Colonic mucosa (tissue), 4 donors: ENCODE measurements at regions of chr3 and their contacts with region 1.

Region 1: GRCh38 chr3:111012388-111013248 is 59.0 kb upstream of the NECTIN3 start:
- DNase-seq: peak; percentile 36
- H3K4me3 ChIP-seq: no peak overlapping the region
- H3K27ac ChIP-seq: no peak overlapping the region
- H3K4me1 ChIP-seq: no peaks in the 10 kb centered on the region
- H3K27me3 ChIP-seq: no peaks in the 10 kb centered on the region
- CTCF ChIP-seq: peak; percentile 24

Region 2: GRCh38 chr3:111080413-111080812 is 67.8 kb after region 1 on chr3:
- intact Hi-C with region 1: no loop called
- DNase-seq: no peak
- H3K4me3 ChIP-seq: no peak overlapping the region
- H3K27ac ChIP-seq: no peak overlapping the region
- H3K4me1 ChIP-seq: no peaks in the 10 kb centered on the region
- H3K27me3 ChIP-seq: no peaks in the 10 kb centered on the region
- CTCF ChIP-seq: peak; percentile 39

Region 3: DNA sequence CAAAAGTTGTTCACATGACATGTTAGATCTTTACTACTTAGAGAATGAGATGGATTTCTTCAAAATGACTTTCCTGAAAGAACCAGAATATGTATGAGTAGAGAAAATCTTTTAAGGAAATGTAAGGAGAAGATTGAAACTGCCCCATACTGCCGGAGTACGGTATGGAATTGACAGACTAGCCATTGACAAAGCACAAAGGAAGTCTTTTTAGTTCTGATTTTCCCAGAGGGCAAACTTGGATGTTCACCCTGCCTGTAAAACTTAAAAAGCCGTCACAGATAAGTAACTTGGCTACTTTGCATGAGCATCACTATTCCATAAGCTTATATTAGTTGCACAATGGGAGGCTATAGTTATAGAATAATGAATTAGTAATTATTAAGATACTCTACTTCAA is 152.8 kb after region 1 on chr3:
- intact Hi-C with region 1: no loop called
- DNase-seq: no peak
- H3K4me3 ChIP-seq: no peak overlapping the region
- H3K27ac ChIP-seq: no peak overlapping the region
- H3K4me1 ChIP-seq: no peaks in the 10 kb centered on the region
- H3K27me3 ChIP-seq: no peaks in the 10 kb centered on the region
- CTCF ChIP-seq: no peak

Region 4: DNA sequence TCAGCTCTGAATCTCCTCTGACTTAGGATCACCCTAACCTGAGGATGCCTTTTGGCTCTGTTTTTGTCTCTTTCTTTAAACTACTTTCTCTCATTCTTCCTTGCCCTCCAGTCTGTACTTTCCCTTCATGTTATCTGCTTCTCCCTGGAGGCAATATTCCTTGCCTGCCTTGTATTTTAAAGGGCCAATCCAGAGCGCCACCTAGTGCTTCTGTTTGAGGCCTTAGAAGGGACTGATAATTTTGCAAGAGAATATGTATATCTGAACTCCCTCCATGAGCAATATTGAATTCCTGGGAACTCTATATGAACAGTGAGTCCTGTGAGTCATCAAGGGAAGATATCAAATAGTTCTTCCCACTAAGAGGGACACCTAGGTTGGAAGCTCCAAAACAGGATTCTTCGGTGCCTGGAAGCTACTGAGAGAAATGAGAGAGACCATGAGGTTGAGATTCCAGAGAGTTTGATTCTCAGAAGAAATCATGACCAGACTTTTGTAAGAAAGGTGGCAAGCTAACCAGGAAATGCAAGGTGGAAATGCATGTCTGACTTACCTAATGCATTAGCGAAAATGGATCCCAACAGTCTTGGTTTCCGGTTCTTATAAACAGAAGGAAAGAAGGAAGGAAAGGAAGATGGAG is 325.6 kb after region 1 on chr3:
- intact Hi-C with region 1: loop called (anchors 5 kb)
- DNase-seq: peak; percentile 74
- H3K4me3 ChIP-seq: no peak overlapping the region
- H3K27ac ChIP-seq: no peak overlapping the region
- H3K4me1 ChIP-seq: no peaks in the 10 kb centered on the region
- H3K27me3 ChIP-seq: no peaks in the 10 kb centered on the region
- CTCF ChIP-seq: peak; percentile 45